Esophagus muscularis mucosa (tissue), 4 donors: ENCODE measurements at regions of chr7 and their contacts with region 1.

Region 1: DNA sequence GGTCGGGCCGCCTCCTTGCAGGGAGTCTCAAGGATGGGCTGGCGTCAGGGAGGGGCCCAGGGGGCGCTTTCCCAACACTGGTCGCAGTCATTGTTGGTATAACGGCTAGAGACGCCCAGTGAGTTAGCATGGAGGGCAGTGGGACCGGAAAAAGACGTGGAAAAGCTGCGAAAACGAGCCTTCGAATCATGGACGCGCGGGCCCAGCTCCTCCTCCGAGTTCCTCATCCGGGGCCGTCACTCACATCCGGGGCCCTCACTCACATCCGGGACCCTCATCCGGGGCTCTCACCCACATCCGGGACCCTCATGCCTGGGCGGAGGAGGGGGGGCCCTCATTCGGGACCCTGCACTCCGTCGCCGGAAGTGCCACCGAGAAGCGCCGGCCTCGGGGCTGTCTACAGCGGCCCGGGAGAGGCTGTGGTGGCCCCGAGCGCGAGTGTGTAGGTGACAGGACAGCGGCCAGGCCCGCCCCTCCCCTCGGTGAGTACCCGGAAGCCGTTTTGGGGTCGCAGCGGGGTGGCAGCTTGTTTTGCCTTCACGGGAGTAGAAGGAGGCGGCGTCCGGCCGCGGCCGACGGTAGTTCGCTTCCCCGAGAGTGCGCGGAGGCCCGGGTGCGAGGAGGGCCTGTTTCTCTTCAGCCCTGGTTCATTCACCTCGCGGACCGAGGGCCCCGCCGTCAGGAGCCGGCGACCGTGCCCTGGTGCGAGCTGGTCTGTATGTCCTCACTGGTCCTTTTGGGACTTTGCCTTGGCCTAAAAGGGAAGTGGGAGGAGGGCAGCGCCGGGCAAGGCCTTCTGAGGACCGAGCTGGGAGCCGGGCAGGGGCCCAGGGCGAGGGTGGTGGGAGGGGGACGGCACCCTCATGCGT is at the start of gene ZNF655:
- DNase-seq: peak; percentile 98
- H3K4me3 ChIP-seq: peak within 1 kb of the TSS; percentile 72 to 97 (median 96)
- H3K27ac ChIP-seq: peak within 1 kb of the TSS; percentile 97 to 98 (median 98)
- H3K4me1 ChIP-seq: peaks cover 34 to 68% (median 56%) of the 10 kb centered on the region in 4 donors
- H3K27me3 ChIP-seq: no peaks in the 10 kb centered on the region
- CTCF ChIP-seq: peak in 1 of 3 experiments; percentile 7
- EP300 ChIP-seq: no peak
- POLR2A ChIP-seq: peak; percentile 84
- total RNA-seq, gene ZNF655: 92.3 to 140 (median 112) TPM

Region 2: DNA sequence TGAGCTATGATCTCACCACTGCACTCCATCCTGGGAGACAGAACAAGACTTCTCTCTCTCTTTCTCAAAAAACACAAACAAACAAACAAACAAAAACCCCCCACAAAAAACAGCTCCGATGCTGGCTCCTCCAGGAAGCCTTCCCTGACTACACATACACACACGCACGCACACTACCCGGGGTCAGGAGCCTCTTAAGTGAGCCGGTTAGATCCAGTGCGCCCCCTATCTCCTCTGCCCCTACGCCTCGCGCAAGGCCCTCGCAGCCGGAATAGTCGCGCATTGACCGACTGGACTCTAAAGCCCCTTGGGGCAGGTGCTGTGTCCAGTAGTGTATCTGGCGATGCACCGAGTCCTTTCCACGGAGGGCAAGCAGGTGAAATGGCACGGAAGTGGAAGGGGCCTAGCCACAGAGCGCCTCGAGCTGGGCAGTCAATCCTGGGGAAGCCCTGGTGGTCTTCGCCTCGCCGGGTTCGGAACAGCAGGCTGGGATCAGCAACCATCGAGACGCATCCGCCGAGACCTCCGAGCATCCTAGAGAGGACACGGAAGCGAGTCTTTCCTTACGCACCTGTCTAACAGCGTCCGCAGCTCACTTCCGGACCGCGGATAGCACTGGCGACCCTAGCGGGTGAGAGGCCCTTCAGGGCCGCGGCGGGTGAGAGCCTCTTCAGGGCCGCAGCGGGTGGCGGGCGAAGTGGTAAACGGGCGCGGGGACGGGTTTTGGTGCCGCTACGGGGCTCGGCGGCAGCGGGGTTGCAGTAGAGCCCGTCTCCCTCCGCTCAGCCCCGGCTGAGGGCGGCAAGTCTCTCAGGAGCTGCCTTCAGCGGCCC is 58.0 kb after region 1 on chr7 and contains the start of gene ZSCAN25:
- intact Hi-C with region 1: loop called (anchors 5 kb)
- DNase-seq: peak; percentile 97
- H3K4me3 ChIP-seq: peak within 1 kb of the TSS; percentile 67 to 98 (median 92)
- H3K27ac ChIP-seq: peak within 1 kb of the TSS; percentile 83 to 93 (median 88)
- H3K4me1 ChIP-seq: peaks cover 13 to 30% (median 25%) of the 10 kb centered on the region in 4 donors
- H3K27me3 ChIP-seq: no peaks in the 10 kb centered on the region
- CTCF ChIP-seq: peak; percentile 22 to 44 (median 36)
- EP300 ChIP-seq: no peak
- POLR2A ChIP-seq: no peak
- total RNA-seq, gene ZSCAN25: 12.1 to 17.1 (median 14.2) TPM

Region 3: GRCh38 chr7:99679032-99679399 is 120.5 kb after region 1 on chr7:
- intact Hi-C with region 1: no loop called
- DNase-seq: no peak
- H3K4me3 ChIP-seq: peak overlapping the region; percentile 9 to 27 (median 18)
- H3K27ac ChIP-seq: no peak overlapping the region
- H3K4me1 ChIP-seq: peaks cover 0 to 8% (median 3%) of the 10 kb centered on the region in 4 donors
- H3K27me3 ChIP-seq: no peaks in the 10 kb centered on the region
- CTCF ChIP-seq: no peak
- EP300 ChIP-seq: no peak
- POLR2A ChIP-seq: no peak

Region 4: DNA sequence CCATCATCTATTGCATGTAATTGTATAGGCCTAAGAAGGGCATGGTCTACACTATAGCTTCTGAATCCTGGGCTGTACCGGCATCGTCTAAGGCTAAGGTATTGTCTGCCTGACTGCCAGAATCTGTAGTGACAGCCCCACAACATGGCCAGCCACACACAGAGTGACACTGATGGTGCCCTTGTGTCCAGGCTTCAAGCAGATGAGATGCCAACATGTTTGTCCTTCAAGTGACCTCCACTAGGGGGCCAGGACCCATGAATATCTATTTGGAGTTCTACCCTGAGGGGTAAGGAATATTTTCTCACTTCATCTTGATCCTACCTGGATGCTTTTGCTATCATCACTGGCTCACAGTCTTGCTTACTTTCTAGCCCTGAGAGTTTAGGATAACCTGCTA is 174.9 kb after region 1 on chr7:
- intact Hi-C with region 1: no loop called
- DNase-seq: peak; percentile 64
- H3K4me3 ChIP-seq: no peak overlapping the region
- H3K27ac ChIP-seq: no peak overlapping the region
- H3K4me1 ChIP-seq: no peaks in the 10 kb centered on the region
- H3K27me3 ChIP-seq: no peaks in the 10 kb centered on the region
- CTCF ChIP-seq: no peak
- EP300 ChIP-seq: no peak
- POLR2A ChIP-seq: no peak

Region 5: DNA sequence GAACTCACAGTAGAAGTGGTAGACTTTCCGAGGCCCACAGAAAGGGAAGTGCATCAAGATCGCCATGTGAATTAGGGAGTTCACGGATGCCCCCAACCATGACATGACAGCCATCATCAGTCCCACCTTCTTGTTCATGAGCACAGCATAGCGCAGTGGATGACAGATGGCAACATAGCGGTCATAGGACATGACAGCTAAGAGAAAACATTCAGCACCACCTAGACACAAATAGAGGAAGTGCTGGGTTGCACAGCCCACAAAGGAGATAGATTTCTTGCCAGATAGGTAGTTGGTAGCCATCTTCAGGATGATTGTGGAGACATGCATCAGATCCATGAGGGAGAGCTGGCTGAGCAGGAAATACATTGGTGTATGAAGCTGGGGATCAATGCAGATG is 318.0 kb after region 1 on chr7:
- intact Hi-C with region 1: no loop called
- DNase-seq: no peak
- H3K4me3 ChIP-seq: no peak overlapping the region
- H3K27ac ChIP-seq: no peak overlapping the region
- H3K4me1 ChIP-seq: no peaks in the 10 kb centered on the region
- H3K27me3 ChIP-seq: no peaks in the 10 kb centered on the region
- CTCF ChIP-seq: no peak
- EP300 ChIP-seq: no peak
- POLR2A ChIP-seq: no peak